Thyroid gland (tissue), 4 donors: ENCODE measurements at regions of chr16 and their contacts with region 1.

Region 1: GRCh38 chr16:75471723-75472633 is 7.5 kb upstream of the TMEM170A start:
- DNase-seq: peak; percentile 61 to 65
- H3K4me3 ChIP-seq: no peak overlapping the region
- H3K27ac ChIP-seq: no peak overlapping the region
- H3K4me1 ChIP-seq: no peaks in the 10 kb centered on the region
- H3K27me3 ChIP-seq: no peaks in the 10 kb centered on the region
- CTCF ChIP-seq: peak; percentile 11 to 85 (median 68)
- POLR2A ChIP-seq: no peak

Region 2: GRCh38 chr16:75506567-75506966 is 34.6 kb after region 1 on chr16:
- intact Hi-C with region 1: loop called (anchors 2 kb)
- DNase-seq: no peak
- H3K4me3 ChIP-seq: no peak overlapping the region
- H3K27ac ChIP-seq: no peak overlapping the region
- H3K4me1 ChIP-seq: no peaks in the 10 kb centered on the region
- H3K27me3 ChIP-seq: no peaks in the 10 kb centered on the region
- CTCF ChIP-seq: no peak
- POLR2A ChIP-seq: no peak

Region 3: DNA sequence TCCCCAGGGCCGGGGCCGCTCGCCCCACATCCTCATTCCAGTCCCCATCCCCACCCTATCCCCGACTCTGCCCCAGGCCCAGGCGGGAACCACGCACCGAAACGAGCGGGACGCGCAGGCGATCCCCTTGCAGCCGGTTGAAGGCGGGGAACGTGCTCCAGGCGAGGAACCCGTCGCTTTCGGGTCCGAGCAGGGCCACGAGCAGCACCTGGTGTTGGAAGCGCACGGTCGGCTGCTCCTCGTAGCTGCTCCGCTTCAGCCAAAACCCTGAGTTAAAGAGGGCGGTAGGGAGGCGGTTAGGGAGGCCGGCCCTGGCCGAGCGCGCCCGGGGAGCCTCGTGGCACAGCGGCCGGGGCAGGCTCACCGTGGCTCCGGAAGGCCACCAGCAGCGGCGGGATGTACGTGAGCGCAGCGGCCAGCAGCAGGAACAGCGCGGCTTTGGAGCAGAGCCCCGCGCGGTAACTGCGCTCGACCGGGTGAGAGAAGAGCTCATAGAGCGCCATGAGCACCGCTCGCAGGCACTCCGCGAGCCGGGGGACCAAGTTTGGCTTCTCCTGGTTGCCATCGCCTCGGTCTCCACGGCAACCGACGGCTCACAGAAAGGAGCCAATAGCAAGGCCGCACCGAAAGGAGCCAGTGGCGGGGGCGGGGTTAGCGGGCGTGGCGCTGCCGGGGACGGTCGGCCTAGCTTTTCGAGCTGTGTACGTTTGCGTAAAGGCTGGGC is 83.9 kb after region 1 on chr16 and contains the start of gene TMEM231:
- intact Hi-C with region 1: loop called (anchors 10 kb)
- DNase-seq: peak; percentile 99
- H3K4me3 ChIP-seq: peak within 1 kb of the TSS; percentile 7 to 75 (median 36)
- H3K27ac ChIP-seq: peak within 1 kb of the TSS; percentile 71 to 79 (median 78)
- H3K4me1 ChIP-seq: peaks cover 0 to 6% of the 10 kb centered on the region in 2 donors
- H3K27me3 ChIP-seq: no peaks in the 10 kb centered on the region
- CTCF ChIP-seq: peak in 1 of 6 experiments; percentile 12
- POLR2A ChIP-seq: peak in 1 of 2 donors; percentile 70
- total RNA-seq, gene TMEM231: 3.6 to 22.2 (median 10.9) TPM

Region 4: DNA sequence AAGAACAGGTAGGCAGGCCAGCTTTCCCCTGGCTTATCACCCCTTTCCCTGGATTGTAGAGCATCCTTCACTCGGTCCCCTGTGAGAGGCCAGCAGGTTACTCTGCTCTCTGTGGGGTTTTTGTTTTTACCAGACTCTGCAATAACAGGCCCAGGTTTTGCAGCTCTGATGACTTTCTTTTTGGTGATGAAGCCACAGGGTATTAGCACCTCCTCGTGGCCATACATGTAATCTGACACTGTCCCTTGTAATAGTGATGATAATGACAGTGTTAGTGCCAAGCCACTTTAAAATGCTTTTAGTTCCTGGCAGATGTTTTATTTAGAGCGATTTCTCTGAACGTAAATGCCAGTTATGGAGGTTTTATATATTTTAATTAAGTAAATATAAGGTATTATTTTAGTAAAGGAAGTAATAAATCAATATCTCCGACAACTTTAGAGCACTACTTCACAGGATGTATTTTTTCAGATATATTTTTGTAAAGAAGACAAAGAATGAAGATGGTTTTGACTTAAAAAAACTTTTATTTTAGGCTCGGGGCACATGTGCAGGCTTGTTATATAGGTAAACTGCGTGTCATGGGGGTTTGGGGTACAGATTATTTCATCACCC is 292.3 kb after region 1 on chr16:
- intact Hi-C with region 1: loop called (anchors 5 kb)
- DNase-seq: peak; percentile 68 to 69
- H3K4me3 ChIP-seq: no peak overlapping the region
- H3K27ac ChIP-seq: no peak overlapping the region
- H3K4me1 ChIP-seq: no peaks in the 10 kb centered on the region
- H3K27me3 ChIP-seq: no peaks in the 10 kb centered on the region
- CTCF ChIP-seq: peak; percentile 34 to 94 (median 82)
- POLR2A ChIP-seq: no peak